H1 (cell line): ENCODE measurements at regions of chr13 and their contacts with region 1.

Region 1: GRCh38 chr13:30334663-30335386 is 27.5 kb upstream of the KATNAL1 start:
- DNase-seq: peak in 1 of 2 experiments; percentile 63
- H3K4me3 ChIP-seq: no peak overlapping the region
- H3K27ac ChIP-seq: no peak overlapping the region
- H3K4me1 ChIP-seq: peaks cover 0 to 5% (median 2%) of the 10 kb centered on the region in 4 experiments; a peak in 3 of 7 replicates
- H3K27me3 ChIP-seq: no peaks in the 10 kb centered on the region; a peak in 1 of 7 replicates
- CTCF ChIP-seq: peak; percentile 24 to 76 (median 71)
- EP300 ChIP-seq: no peak
- POLR2A ChIP-seq: no peak
- RAD21 ChIP-seq: peak; percentile 65 to 76

Region 2: GRCh38 chr13:30132623-30133553 is 201.9 kb before region 1 on chr13:
- CTCF ChIA-PET with region 1: interaction called, 53 read pairs
- POLR2A ChIA-PET with region 1: no interaction called
- DNase-seq: peak; percentile 93 to 100
- H3K4me3 ChIP-seq: no peak overlapping the region
- H3K27ac ChIP-seq: no peak overlapping the region
- H3K4me1 ChIP-seq: peaks cover 0 to 2% (median 0%) of the 10 kb centered on the region in 4 experiments; a peak in 1 of 7 replicates
- H3K27me3 ChIP-seq: 0 out of 7 replicates have a peak, but pooled peaks cover 0 to 3% (median 0%) of the 10 kb centered on the region in 4 experiments
- CTCF ChIP-seq: peak; percentile 83 to 92 (median 91)
- EP300 ChIP-seq: no peak
- POLR2A ChIP-seq: no peak
- RAD21 ChIP-seq: peak; percentile 96

Region 3: GRCh38 chr13:30355384-30355699 is 20.5 kb after region 1 on chr13:
- CTCF ChIA-PET with region 1: interaction called, 10 read pairs
- POLR2A ChIA-PET with region 1: no interaction called
- DNase-seq: peak in 1 of 2 experiments; percentile 60
- H3K4me3 ChIP-seq: no peak overlapping the region
- H3K27ac ChIP-seq: no peak overlapping the region
- H3K4me1 ChIP-seq: no peaks in the 10 kb centered on the region
- H3K27me3 ChIP-seq: no peaks in the 10 kb centered on the region
- CTCF ChIP-seq: no peak
- EP300 ChIP-seq: no peak
- POLR2A ChIP-seq: no peak
- RAD21 ChIP-seq: peak; percentile 15 to 36; a peak in 1 of 4 replicates